B cell (primary cell): ENCODE measurements at regions of chr6 and their contacts with region 1.

Region 1: GRCh38 chr6:149246691-149247384 is 70.7 kb upstream of the TAB2 start:
- DNase-seq: peak; percentile 76
- ATAC-seq: peak; percentile 97
- H3K4me3 ChIP-seq: peak overlapping the region in 4 of 5 experiments; percentile 4 to 64 (median 42)
- H3K4me3 Mint-ChIP-seq: peak overlapping the region; percentile 79
- H3K27ac ChIP-seq: peak overlapping the region; percentile 48 to 71
- H3K27ac Mint-ChIP-seq: peak overlapping the region; percentile 89
- H3K4me1 ChIP-seq: peaks cover 32 to 33% of the 10 kb centered on the region in 2 donors
- H3K4me1 Mint-ChIP-seq: peaks cover 52% of the 10 kb centered on the region
- H3K27me3 ChIP-seq: no peaks in the 10 kb centered on the region
- H3K27me3 Mint-ChIP-seq: no peaks in the 10 kb centered on the region
- CTCF ChIP-seq: no peak

Region 2: DNA sequence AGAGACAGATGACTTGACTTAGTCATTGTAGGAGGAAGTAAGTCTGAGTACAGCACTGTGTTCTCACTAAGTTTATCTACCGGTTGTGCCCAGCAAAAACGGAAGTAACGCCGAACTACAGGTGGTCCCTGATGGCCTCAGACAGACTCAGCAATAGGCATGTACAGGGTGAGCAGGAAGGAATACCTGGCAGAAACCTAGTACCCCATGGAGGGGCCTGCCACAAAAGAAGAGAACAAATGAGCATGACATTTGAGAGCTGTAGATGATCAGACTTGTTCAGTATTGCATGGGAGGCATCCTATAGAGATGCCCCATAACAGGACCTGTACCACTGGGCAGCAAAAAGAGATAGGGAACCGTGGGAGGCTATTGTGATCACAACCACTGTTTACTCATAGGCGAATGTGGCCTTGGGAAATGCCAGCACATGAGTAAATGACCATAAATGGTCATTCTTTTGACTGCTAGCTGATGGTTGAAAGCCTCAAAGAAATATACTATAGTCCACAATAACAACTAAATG is 35.7 kb before region 1 on chr6:
- CTCF ChIA-PET with region 1: interaction called, 3 read pairs
- POLR2A ChIA-PET with region 1: interaction called, 4 read pairs
- intact Hi-C with region 1: loop called (anchors 5 kb)
- DNase-seq: peak; percentile 72
- ATAC-seq: peak; percentile 95
- H3K4me3 ChIP-seq: peak overlapping the region in 1 of 5 experiments; percentile 8
- H3K4me3 Mint-ChIP-seq: peak overlapping the region; percentile 36
- H3K27ac ChIP-seq: peak overlapping the region; percentile 38 to 77
- H3K27ac Mint-ChIP-seq: peak overlapping the region; percentile 90
- H3K4me1 ChIP-seq: peaks cover 28 to 32% of the 10 kb centered on the region in 2 donors
- H3K4me1 Mint-ChIP-seq: peaks cover 20% of the 10 kb centered on the region
- H3K27me3 ChIP-seq: no peaks in the 10 kb centered on the region
- H3K27me3 Mint-ChIP-seq: no peaks in the 10 kb centered on the region
- CTCF ChIP-seq: no peak

Region 3: GRCh38 chr6:149233056-149233715 is 13.7 kb before region 1 on chr6:
- CTCF ChIA-PET with region 1: interaction called, 3 read pairs
- POLR2A ChIA-PET with region 1: interaction called, 4 read pairs
- intact Hi-C with region 1: loop called (anchors 2 kb)
- DNase-seq: no peak
- ATAC-seq: no peak
- H3K4me3 ChIP-seq: no peak overlapping the region
- H3K4me3 Mint-ChIP-seq: no peak overlapping the region
- H3K27ac ChIP-seq: no peak overlapping the region
- H3K27ac Mint-ChIP-seq: no peak overlapping the region
- H3K4me1 ChIP-seq: peaks cover 27 to 41% of the 10 kb centered on the region in 2 donors
- H3K4me1 Mint-ChIP-seq: peaks cover 53% of the 10 kb centered on the region
- H3K27me3 ChIP-seq: no peaks in the 10 kb centered on the region
- H3K27me3 Mint-ChIP-seq: no peaks in the 10 kb centered on the region
- CTCF ChIP-seq: no peak

Region 4: DNA sequence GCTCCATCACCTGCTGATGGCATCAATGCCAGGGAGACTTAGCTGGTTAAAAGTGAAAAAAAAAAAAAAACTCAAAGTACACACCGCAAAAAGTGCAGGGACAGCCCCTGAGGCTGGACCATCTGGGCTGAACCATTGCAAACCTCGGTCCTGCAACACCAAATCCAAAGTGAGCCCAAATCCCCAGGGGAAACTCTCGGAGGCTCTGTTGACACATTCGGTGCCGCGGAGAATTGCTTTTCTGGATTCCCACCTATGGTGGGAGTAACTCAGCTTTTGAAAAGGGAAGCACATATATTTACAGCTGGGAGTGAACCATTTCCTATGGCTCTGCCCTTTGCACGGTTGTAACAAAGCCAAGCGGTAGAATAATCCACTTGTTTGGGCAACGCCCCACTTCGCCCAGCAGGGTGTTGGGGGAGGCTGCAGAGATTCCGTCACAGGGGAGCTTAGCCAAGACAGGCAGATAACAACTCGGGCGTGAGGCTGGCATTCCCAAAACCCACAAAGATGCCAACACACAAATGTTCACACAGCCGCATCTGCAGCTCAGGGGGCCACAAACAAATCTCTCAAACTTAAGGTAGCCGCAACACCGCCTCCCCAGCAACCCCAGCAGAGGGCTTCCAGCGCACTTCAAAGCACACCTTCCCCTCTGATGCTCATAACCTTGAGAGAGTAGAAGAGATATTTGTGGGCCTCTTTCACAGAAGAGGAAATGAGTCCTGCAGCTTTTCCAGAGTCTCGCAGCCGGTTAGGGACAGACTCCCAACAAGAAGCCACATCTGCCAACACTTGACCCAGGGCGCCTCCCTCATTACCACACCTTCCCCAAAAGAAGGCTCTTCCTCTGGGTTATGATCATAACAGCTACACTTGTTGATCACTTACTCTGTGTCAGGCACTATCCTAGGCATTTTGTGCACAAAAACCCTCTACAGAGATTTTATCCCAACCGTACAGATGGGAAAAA is 226.5 kb after region 1 on chr6:
- CTCF ChIA-PET with region 1: no interaction called
- POLR2A ChIA-PET with region 1: no interaction called
- intact Hi-C with region 1: no loop called
- DNase-seq: peak; percentile 65
- ATAC-seq: peak; percentile 34
- H3K4me3 ChIP-seq: peak overlapping the region in 4 of 5 experiments; percentile 5 to 55 (median 38)
- H3K4me3 Mint-ChIP-seq: peak overlapping the region; percentile 89
- H3K27ac ChIP-seq: peak overlapping the region; percentile 67 to 84
- H3K27ac Mint-ChIP-seq: peak overlapping the region; percentile 94
- H3K4me1 ChIP-seq: peaks cover 87 to 98% of the 10 kb centered on the region in 2 donors
- H3K4me1 Mint-ChIP-seq: peaks cover 84% of the 10 kb centered on the region
- H3K27me3 ChIP-seq: no peaks in the 10 kb centered on the region
- H3K27me3 Mint-ChIP-seq: no peaks in the 10 kb centered on the region
- CTCF ChIP-seq: peak; percentile 48

Region 5: DNA sequence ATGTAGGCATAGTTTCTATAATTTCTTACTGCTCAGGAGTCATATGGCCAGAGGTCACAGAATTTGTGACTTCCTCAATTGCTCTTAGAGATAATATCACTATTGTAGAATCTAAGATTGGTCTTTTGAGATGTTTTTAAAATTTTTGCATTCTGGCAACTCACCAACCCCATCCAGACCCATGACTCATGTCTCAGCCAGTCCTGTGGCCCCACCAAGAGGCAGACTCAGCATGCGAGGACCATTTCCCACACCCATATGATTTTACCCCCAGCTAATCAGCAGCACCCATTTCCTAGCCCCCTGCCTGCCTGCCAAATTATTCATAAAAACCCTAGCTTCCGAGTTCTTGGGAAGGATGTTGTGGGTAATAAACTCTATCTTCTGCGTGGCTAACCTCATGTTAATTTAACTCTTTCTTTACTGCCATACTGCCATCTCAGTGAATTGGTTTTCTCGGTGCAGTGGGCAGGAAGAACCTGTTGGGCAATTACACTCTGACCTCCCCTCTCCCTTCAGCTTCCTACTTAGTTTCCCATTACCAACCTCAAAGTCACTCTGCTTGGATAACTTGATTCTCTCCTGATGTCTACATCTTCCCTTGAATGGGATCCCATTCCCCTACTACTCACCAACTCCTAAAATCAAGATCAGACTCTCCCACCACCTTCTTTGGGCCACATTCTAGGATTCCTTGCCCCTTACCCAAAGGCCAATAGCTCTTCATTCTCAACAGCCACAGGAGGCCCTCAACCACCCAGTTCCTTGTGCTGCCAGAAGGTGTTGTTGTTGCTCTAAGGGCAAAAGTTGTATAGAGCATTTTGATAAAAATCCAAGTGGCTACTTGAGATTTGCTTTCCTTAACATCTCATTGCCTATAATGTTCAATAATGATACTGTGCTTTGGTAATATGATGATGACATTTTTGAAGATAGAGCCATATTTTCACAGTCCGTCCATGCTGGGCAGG is 1105.8 kb after region 1 on chr6:
- CTCF ChIA-PET with region 1: no interaction called
- POLR2A ChIA-PET with region 1: no interaction called
- intact Hi-C with region 1: no loop called
- DNase-seq: no peak
- ATAC-seq: no peak
- H3K4me3 ChIP-seq: no peak overlapping the region
- H3K4me3 Mint-ChIP-seq: no peak overlapping the region
- H3K27ac ChIP-seq: no peak overlapping the region
- H3K27ac Mint-ChIP-seq: no peak overlapping the region
- H3K4me1 ChIP-seq: peaks cover 4 to 8% of the 10 kb centered on the region in 2 donors
- H3K4me1 Mint-ChIP-seq: peaks cover 5% of the 10 kb centered on the region
- H3K27me3 ChIP-seq: peaks cover 0 to 13% (median 0%) of the 10 kb centered on the region in 4 experiments
- H3K27me3 Mint-ChIP-seq: peaks cover 13% of the 10 kb centered on the region
- CTCF ChIP-seq: no peak